ENCODE measurements at regions of chr3 and their contacts with region 1.

Region 1: DNA sequence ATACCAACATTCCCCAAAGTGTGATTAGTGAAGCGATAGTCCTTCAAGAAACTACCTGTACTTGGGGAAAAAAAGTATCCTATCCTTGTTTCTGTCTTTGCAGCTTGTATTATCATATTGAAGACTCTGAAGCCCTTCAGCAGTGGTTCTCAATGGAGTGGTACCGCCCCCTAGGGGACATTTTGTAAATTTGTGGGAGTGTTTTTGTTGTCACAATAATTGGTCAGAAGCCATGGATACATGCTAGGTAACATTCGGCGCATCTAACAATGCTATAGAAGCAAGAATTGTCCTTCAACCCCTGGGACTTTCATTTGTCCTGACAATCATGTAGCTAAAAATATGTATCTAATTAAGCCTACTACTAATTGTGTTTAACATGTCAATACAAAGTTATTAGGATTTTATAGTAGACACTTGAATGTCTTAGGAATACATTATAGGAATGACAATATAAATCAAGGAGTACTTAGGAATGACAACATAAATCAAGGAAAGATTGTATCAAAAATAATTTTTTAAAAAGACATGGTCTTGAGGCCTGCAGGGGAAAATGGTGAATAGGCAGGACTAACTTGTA is 53.7 kb downstream of the NMD3 start:
- DNase-seq: peak; percentile 24 to 55 (median 40)
- H3K4me3 ChIP-seq: no peak overlapping the region
- H3K4me3 Mint-ChIP-seq: no peak overlapping the region
- H3K27ac ChIP-seq: no peak overlapping the region
- H3K27ac Mint-ChIP-seq: no peak overlapping the region
- H3K4me1 ChIP-seq: no peaks in the 10 kb centered on the region
- H3K4me1 Mint-ChIP-seq: peaks cover 0 to 3% (median under 1%) of the 10 kb centered on the region in 4 donors
- H3K27me3 ChIP-seq: no peaks in the 10 kb centered on the region
- H3K27me3 Mint-ChIP-seq: no peaks in the 10 kb centered on the region

Region 2: GRCh38 chr3:160707187-160707794 is 567.5 kb before region 1 on chr3:
- CTCF ChIA-PET with region 1: no interaction called
- POLR2A ChIA-PET with region 1: no interaction called
- intact Hi-C with region 1: loop called (anchors 5 kb)
- DNase-seq: peak in 4 of 5 donors; percentile 36 to 44 (median 40)
- H3K4me3 ChIP-seq: no peak overlapping the region
- H3K4me3 Mint-ChIP-seq: no peak overlapping the region
- H3K27ac ChIP-seq: no peak overlapping the region
- H3K27ac Mint-ChIP-seq: no peak overlapping the region
- H3K4me1 ChIP-seq: no peaks in the 10 kb centered on the region
- H3K4me1 Mint-ChIP-seq: no peaks in the 10 kb centered on the region
- H3K27me3 ChIP-seq: no peaks in the 10 kb centered on the region
- H3K27me3 Mint-ChIP-seq: peaks cover 24 to 36% of the 10 kb centered on the region in 2 donors

Region 3: GRCh38 chr3:161096771-161097355 is 177.9 kb before region 1 on chr3:
- CTCF ChIA-PET with region 1: interaction called, 12 read pairs
- POLR2A ChIA-PET with region 1: no interaction called
- intact Hi-C with region 1: no loop called
- DNase-seq: peak in 4 of 5 donors; percentile 6 to 13 (median 7)
- H3K4me3 ChIP-seq: no peak overlapping the region
- H3K4me3 Mint-ChIP-seq: no peak overlapping the region
- H3K27ac ChIP-seq: no peak overlapping the region
- H3K27ac Mint-ChIP-seq: no peak overlapping the region
- H3K4me1 ChIP-seq: no peaks in the 10 kb centered on the region
- H3K4me1 Mint-ChIP-seq: no peaks in the 10 kb centered on the region
- H3K27me3 ChIP-seq: no peaks in the 10 kb centered on the region
- H3K27me3 Mint-ChIP-seq: peaks cover 0 to 4% of the 10 kb centered on the region in 2 donors

Region 4: GRCh38 chr3:161284989-161285388 is 10.2 kb after region 1 on chr3:
- CTCF ChIA-PET with region 1: interaction called, 15 read pairs
- POLR2A ChIA-PET with region 1: no interaction called
- intact Hi-C with region 1: no loop called
- DNase-seq: no peak
- H3K4me3 ChIP-seq: no peak overlapping the region
- H3K4me3 Mint-ChIP-seq: no peak overlapping the region
- H3K27ac ChIP-seq: no peak overlapping the region
- H3K27ac Mint-ChIP-seq: no peak overlapping the region
- H3K4me1 ChIP-seq: no peaks in the 10 kb centered on the region
- H3K4me1 Mint-ChIP-seq: no peaks in the 10 kb centered on the region
- H3K27me3 ChIP-seq: no peaks in the 10 kb centered on the region
- H3K27me3 Mint-ChIP-seq: no peaks in the 10 kb centered on the region

Region 5: GRCh38 chr3:161305095-161305991 is 30.5 kb after region 1 on chr3:
- CTCF ChIA-PET with region 1: interaction called, 17 read pairs
- POLR2A ChIA-PET with region 1: interaction called, 5 read pairs
- intact Hi-C with region 1: loop called (anchors 5 kb)
- DNase-seq: peak in 4 of 5 donors; percentile 11 to 26 (median 17)
- H3K4me3 ChIP-seq: no peak overlapping the region
- H3K4me3 Mint-ChIP-seq: peak overlapping the region in 2 of 8 donors; percentile 18 to 31
- H3K27ac ChIP-seq: no peak overlapping the region
- H3K27ac Mint-ChIP-seq: no peak overlapping the region
- H3K4me1 ChIP-seq: peaks cover 24% of the 10 kb centered on the region
- H3K4me1 Mint-ChIP-seq: peaks cover 22 to 42% (median 28%) of the 10 kb centered on the region in 4 donors
- H3K27me3 ChIP-seq: no peaks in the 10 kb centered on the region
- H3K27me3 Mint-ChIP-seq: no peaks in the 10 kb centered on the region

Region 6: GRCh38 chr3:161310649-161311423 is 36.0 kb after region 1 on chr3:
- CTCF ChIA-PET with region 1: interaction called, 17 read pairs
- POLR2A ChIA-PET with region 1: interaction called, 5 read pairs
- intact Hi-C with region 1: loop called (anchors 5 kb)
- DNase-seq: peak; percentile 75 to 79 (median 77)
- H3K4me3 ChIP-seq: no peak overlapping the region
- H3K4me3 Mint-ChIP-seq: peak overlapping the region; percentile 1 to 77 (median 45)
- H3K27ac ChIP-seq: no peak overlapping the region
- H3K27ac Mint-ChIP-seq: peak overlapping the region; percentile 68 to 88 (median 82)
- H3K4me1 ChIP-seq: peaks cover 55% of the 10 kb centered on the region
- H3K4me1 Mint-ChIP-seq: peaks cover 47 to 83% (median 58%) of the 10 kb centered on the region in 4 donors
- H3K27me3 ChIP-seq: no peaks in the 10 kb centered on the region
- H3K27me3 Mint-ChIP-seq: no peaks in the 10 kb centered on the region

Region 7: GRCh38 chr3:161423911-161424522 is 149.2 kb after region 1 on chr3:
- CTCF ChIA-PET with region 1: interaction called, 54 read pairs
- POLR2A ChIA-PET with region 1: no interaction called
- intact Hi-C with region 1: loop called (anchors 1 kb)
- DNase-seq: peak in 4 of 5 donors; percentile 45 to 50 (median 48)
- H3K4me3 ChIP-seq: no peak overlapping the region
- H3K4me3 Mint-ChIP-seq: no peak overlapping the region
- H3K27ac ChIP-seq: no peak overlapping the region
- H3K27ac Mint-ChIP-seq: no peak overlapping the region
- H3K4me1 ChIP-seq: peaks cover 8% of the 10 kb centered on the region
- H3K4me1 Mint-ChIP-seq: peaks cover 6 to 11% (median 9%) of the 10 kb centered on the region in 4 donors
- H3K27me3 ChIP-seq: no peaks in the 10 kb centered on the region
- H3K27me3 Mint-ChIP-seq: no peaks in the 10 kb centered on the region

Measured in CD4-positive, alpha-beta memory T cell (primary cell).